A549 (cell line): ENCODE measurements at regions of chr17 and their contacts with region 1.

Region 1: GRCh38 chr17:76121932-76122430 is 18.4 kb upstream of the EXOC7 start:
- DNase-seq: no peak
- ATAC-seq: peak in 1 of 2 experiments; percentile 3; a peak in 2 of 6 replicates
- H3K4me3 ChIP-seq: peak overlapping the region; percentile 2; the same call in 1 of the 3 replicates
- H3K27ac ChIP-seq: peak overlapping the region; percentile 68 to 90
- H3K4me1 ChIP-seq: peaks cover 5% of the 10 kb centered on the region
- CTCF ChIP-seq: no peak
- EP300 ChIP-seq: no peak
- POLR2A ChIP-seq: no peak
- RAD21 ChIP-seq: no peak

Region 2: DNA sequence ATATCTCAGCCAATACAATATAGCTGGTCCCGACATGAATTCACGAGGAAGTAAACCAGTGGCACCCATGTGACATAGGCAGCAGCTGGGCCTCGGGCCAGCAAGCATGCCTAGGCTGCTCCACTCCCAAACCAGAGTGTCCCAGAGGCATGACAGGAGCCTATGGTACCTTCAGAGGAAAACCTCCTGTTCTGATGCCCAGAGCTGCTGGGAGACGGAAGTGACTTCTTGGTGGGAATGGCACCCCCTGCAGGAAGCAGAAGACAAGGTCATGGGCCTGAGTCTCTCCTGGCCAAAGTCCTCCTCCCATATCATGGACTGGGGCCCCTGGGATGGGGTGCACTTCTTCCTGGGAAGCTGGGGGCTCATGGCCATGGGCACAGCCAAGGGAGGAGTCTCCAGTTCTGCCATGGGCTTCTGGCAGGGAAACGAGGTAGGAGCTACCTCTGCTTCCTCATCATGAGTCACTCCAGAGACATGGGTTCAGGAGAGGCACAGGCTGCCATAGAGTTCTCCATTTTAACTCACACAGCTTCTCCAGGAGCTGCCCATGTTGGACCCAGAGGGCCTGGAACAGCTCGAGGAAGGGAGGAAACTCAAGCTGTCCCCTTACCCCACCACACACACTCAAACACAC is 194.6 kb before region 1 on chr17:
- CTCF ChIA-PET with region 1: no interaction called
- POLR2A ChIA-PET with region 1: no interaction called
- DNase-seq: peak; percentile 62 to 80
- ATAC-seq: peak; percentile 62 to 88; a peak in 5 of 6 replicates
- H3K4me3 ChIP-seq: no peak overlapping the region
- H3K27ac ChIP-seq: no peak overlapping the region
- H3K4me1 ChIP-seq: no peaks in the 10 kb centered on the region
- CTCF ChIP-seq: peak; percentile 32
- EP300 ChIP-seq: no peak
- POLR2A ChIP-seq: no peak
- RAD21 ChIP-seq: peak in 1 of 2 experiments; percentile 31; a peak in 2 of 5 replicates

Region 3: DNA sequence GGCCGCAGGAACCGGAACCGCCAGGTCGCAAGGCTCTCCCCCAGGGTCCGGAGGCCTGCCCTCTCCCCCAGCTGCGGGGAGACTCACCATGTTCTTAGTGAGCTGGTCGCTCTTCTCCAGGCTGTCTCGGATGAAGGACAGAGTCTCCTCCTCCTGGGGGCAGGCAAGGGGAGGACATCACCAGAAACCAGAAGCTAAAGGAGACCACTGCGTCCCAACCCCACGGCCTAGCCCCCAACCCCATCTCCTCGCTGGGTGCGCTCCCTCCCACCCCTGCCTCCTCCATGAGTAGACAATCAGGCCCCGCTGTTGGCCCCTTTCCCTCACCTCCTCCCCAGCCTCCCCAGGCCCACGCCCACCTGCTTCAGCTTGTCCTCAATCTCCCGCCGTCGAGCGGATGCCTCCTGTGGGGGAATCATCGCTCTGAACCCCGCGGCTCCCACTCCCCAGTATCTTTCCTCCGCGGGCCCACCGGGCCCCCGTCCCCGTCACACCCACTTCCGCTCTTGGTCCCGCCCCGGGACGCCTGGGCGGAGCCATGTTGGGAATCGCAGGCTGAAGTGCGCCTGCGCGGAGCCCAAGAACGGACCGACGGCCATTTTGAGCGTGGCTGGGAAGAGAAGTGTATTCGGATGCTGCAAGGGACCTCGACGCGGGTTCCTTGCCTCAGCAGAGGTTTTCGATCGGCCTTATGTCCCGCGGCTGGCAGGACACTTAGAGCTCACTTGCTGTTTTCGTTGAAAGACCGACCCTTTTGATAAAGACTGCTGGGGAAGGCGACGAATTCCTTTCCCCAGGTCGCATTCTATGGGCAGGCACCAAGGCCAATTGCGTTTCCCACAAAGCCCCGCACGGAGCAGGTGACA is 18.5 kb before region 1 on chr17 and contains the start of gene EXOC7:
- CTCF ChIA-PET with region 1: interaction called, 114 read pairs
- POLR2A ChIA-PET with region 1: no interaction called
- DNase-seq: peak; percentile 95
- ATAC-seq: peak; percentile 93 to 96
- H3K4me3 ChIP-seq: peak within 1 kb of the TSS; percentile 69
- H3K27ac ChIP-seq: peak within 1 kb of the TSS; percentile 84 to 87
- H3K4me1 ChIP-seq: peaks cover 11% of the 10 kb centered on the region
- CTCF ChIP-seq: no peak
- EP300 ChIP-seq: no peak
- POLR2A ChIP-seq: peak; percentile 85
- RAD21 ChIP-seq: no peak
- polyA plus RNA-seq, gene EXOC7: 64.5 and 76.4 TPM in 2 replicates

Region 4: DNA sequence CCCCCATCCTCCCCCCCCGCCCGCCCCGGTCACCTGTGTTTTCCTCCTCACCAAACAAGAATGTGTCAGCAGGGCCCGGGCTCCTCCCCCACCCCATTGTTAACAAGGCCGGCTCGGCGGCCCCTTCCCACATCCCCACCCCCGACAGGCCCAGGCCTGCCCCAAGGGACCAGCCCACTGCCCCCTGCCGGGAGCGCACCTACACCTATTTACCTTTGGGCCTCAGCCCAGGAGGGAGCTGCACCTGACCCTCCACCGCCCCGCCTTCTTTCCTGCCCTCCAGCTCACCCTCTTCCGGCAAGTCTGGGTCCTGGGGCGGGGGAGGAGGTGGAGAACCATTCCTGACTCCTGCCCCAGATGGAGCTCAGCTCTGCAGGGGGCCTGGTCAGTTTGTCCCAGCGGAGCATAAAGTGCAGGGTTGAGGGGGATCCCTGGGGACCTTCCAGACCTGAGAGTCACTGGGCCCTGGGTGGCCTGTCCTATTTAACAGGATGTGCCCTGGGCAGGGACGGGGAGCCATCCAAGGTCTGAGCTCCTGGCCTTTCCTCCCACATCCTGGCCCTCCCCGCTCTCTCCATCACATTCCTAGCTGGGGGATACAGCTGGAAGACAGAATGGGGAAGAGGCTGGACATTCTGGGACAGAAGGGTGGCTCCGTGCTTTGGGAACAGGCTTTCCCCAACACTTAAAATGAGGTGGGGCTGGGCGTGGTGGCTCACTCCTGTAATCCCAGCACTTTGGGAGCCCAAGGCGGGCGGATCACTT is 10.8 kb after region 1 on chr17:
- CTCF ChIA-PET with region 1: interaction called, 39 read pairs
- POLR2A ChIA-PET with region 1: no interaction called
- DNase-seq: no peak
- ATAC-seq: no peak
- H3K4me3 ChIP-seq: no peak overlapping the region
- H3K27ac ChIP-seq: peak overlapping the region; percentile 35 to 69; a peak in 5 of 6 replicates
- H3K4me1 ChIP-seq: peaks cover 28% of the 10 kb centered on the region
- CTCF ChIP-seq: no peak
- EP300 ChIP-seq: no peak
- POLR2A ChIP-seq: no peak
- RAD21 ChIP-seq: no peak

Region 5: GRCh38 chr17:76141212-76142038 is 19.4 kb after region 1 on chr17 and contains the start of gene FOXJ1:
- CTCF ChIA-PET with region 1: interaction called, 206 read pairs
- POLR2A ChIA-PET with region 1: no interaction called
- DNase-seq: peak; percentile 91 to 99
- ATAC-seq: peak; percentile 77 to 92
- H3K4me3 ChIP-seq: peak within 1 kb of the TSS; percentile 47
- H3K27ac ChIP-seq: peak within 1 kb of the TSS in 1 of 2 experiments; percentile 73; a peak in 4 of 6 replicates
- H3K4me1 ChIP-seq: peaks cover 35% of the 10 kb centered on the region
- CTCF ChIP-seq: no peak
- EP300 ChIP-seq: no peak
- POLR2A ChIP-seq: no peak
- RAD21 ChIP-seq: no peak
- polyA plus RNA-seq, gene FOXJ1: 0.09 TPM in 2 replicates

Region 6: DNA sequence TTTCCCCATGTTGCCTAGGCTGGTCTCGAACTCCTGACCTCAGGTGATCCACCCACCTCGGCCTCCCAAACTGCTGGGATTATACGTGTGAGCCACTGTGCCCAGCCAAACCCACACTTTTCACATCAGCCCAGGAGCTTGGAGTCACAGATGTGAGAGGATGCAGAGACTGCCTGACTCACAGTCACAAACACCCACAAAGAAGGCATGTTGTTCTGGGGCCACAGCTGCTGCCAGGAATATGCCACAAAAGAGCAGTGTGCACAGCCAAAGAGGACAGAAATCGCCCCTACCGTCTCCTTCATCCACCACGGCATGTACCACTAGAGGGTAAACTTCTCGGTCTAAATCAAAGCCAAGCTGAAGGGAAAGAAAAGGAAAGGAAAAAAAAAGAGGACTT is 44.2 kb after region 1 on chr17:
- CTCF ChIA-PET with region 1: interaction called, 19 read pairs
- POLR2A ChIA-PET with region 1: no interaction called
- DNase-seq: no peak
- ATAC-seq: no peak
- H3K4me3 ChIP-seq: no peak overlapping the region
- H3K27ac ChIP-seq: no peak overlapping the region
- H3K4me1 ChIP-seq: no peaks in the 10 kb centered on the region
- CTCF ChIP-seq: no peak
- EP300 ChIP-seq: no peak
- POLR2A ChIP-seq: no peak
- RAD21 ChIP-seq: no peak